ENCODE measurements at regions of chr6 and their contacts with region 1.

Region 1: GRCh38 chr6:12011276-12012076 is 636 bp upstream of the HIVEP1 start:
- DNase-seq: peak; percentile 96 to 99 (median 98)
- H3K4me3 ChIP-seq: peak overlapping the region in 2 of 4 donors; percentile 72 to 86
- H3K27ac ChIP-seq: peak overlapping the region in 4 of 5 donors; percentile 94 to 99 (median 95)
- H3K4me1 ChIP-seq: peaks cover 16 to 28% of the 10 kb centered on the region in 2 donors
- H3K27me3 ChIP-seq: no peaks in the 10 kb centered on the region
- CTCF ChIP-seq: no peak
- POLR2A ChIP-seq: peak in 1 of 2 donors; percentile 47

Region 2: DNA sequence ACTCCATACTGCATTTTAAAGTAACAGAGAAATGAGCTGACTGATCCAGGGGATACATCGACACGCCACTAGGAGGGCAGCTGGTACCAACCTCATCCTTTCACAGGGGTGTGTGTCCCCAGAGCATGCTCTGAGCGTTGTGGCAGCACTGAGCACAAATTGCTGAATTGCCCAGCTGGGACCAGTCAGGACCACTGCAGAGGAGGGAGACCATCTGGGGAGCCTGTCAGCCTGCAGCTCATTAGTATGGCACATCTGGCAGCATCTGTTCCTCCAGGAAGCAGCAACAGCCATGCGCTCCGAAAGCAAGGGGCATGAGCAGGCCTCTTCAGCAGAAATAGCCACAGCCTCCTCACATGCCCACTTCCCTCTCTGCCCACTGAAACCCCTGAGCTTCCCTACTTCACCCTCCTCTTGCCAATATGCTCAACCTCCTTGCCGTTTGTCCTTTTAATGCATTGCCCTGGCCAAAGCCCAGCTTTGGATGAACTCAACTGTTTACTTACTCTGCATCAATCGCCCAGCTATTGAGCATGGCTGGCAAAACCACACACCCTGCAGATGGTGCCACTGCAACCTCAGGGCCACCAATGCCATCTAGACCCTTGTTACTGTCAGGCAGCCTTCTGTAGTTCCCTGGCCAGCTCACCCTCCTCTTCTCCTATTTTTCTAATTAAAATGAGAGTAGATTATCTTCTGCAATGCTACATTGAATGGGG is 701.4 kb before region 1 on chr6:
- intact Hi-C with region 1: no loop called
- DNase-seq: no peak
- H3K4me3 ChIP-seq: no peak overlapping the region
- H3K27ac ChIP-seq: no peak overlapping the region
- H3K4me1 ChIP-seq: no peaks in the 10 kb centered on the region
- H3K27me3 ChIP-seq: no peaks in the 10 kb centered on the region
- CTCF ChIP-seq: no peak
- POLR2A ChIP-seq: no peak

Region 3: GRCh38 chr6:11700118-11700718 is 311.3 kb before region 1 on chr6:
- intact Hi-C with region 1: loop called in 1 of 2 experiments (anchors 10 kb)
- DNase-seq: peak in 1 of 7 donors; percentile 33
- H3K4me3 ChIP-seq: no peak overlapping the region
- H3K27ac ChIP-seq: no peak overlapping the region
- H3K4me1 ChIP-seq: no peaks in the 10 kb centered on the region
- H3K27me3 ChIP-seq: no peaks in the 10 kb centered on the region
- CTCF ChIP-seq: peak; percentile 33 to 66 (median 50)
- POLR2A ChIP-seq: no peak

Region 4: GRCh38 chr6:12459945-12460661 is 448.6 kb after region 1 on chr6:
- intact Hi-C with region 1: no loop called
- DNase-seq: no peak
- H3K4me3 ChIP-seq: no peak overlapping the region
- H3K27ac ChIP-seq: no peak overlapping the region
- H3K4me1 ChIP-seq: no peaks in the 10 kb centered on the region
- H3K27me3 ChIP-seq: no peaks in the 10 kb centered on the region
- CTCF ChIP-seq: no peak
- POLR2A ChIP-seq: no peak